ENCODE measurements at regions of chr2 and their contacts with region 1.

Region 1: GRCh38 chr2:45778720-45779171 is 127.3 kb downstream of the PRKCE start:
- DNase-seq: peak; percentile 55
- H3K4me3 ChIP-seq: no peak overlapping the region
- H3K27ac ChIP-seq: no peak overlapping the region
- H3K4me1 ChIP-seq: no peaks in the 10 kb centered on the region
- H3K27me3 ChIP-seq: peaks cover 0 to 2% of the 10 kb centered on the region in 2 experiments
- CTCF ChIP-seq: peak; percentile 52 to 64
- POLR2A ChIP-seq: no peak

Region 2: DNA sequence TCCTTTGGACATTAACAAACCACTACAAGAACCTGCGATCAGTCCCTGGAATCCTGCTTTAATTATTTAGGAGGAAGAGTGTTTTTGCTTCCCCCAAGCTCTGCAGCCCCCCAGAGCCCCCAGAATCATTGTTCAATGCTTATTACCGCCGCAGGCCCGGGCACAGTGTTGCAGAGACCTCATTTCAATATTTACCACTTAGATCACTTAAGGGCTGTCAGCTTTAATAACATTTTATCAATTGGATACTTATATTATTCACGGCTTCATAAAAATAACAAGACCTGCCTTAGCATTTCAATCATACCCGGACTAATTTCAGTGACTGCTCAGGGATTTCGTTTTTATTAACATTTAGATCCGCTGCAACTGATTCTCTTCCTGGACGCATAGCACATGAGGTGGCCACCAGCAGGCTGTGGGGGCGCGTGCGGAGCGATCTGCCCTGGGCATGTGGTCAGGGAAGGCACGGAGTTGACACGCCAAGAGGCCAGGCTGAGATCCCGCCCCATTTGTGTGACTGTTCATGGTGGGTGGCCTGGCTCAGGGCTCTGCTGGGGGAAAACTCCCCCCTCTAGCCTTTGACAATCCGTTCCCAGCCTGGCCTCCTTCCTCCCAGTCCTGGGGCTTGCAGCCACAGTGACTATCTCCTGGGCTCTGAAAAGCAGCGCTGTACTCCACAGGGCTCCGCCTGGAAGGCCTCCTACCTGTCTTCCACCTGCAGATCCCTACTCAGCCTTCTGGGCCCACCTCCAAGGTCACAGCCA is 435.3 kb before region 1 on chr2:
- CTCF ChIA-PET with region 1: no interaction called
- POLR2A ChIA-PET with region 1: no interaction called
- dilution Hi-C with region 1: no loop called
- intact Hi-C with region 1: no loop called
- DNase-seq: no peak
- H3K4me3 ChIP-seq: no peak overlapping the region
- H3K27ac ChIP-seq: no peak overlapping the region
- H3K4me1 ChIP-seq: no peaks in the 10 kb centered on the region
- H3K27me3 ChIP-seq: peaks cover 0 to 1% of the 10 kb centered on the region in 2 experiments
- CTCF ChIP-seq: no peak
- POLR2A ChIP-seq: no peak

Region 3: DNA sequence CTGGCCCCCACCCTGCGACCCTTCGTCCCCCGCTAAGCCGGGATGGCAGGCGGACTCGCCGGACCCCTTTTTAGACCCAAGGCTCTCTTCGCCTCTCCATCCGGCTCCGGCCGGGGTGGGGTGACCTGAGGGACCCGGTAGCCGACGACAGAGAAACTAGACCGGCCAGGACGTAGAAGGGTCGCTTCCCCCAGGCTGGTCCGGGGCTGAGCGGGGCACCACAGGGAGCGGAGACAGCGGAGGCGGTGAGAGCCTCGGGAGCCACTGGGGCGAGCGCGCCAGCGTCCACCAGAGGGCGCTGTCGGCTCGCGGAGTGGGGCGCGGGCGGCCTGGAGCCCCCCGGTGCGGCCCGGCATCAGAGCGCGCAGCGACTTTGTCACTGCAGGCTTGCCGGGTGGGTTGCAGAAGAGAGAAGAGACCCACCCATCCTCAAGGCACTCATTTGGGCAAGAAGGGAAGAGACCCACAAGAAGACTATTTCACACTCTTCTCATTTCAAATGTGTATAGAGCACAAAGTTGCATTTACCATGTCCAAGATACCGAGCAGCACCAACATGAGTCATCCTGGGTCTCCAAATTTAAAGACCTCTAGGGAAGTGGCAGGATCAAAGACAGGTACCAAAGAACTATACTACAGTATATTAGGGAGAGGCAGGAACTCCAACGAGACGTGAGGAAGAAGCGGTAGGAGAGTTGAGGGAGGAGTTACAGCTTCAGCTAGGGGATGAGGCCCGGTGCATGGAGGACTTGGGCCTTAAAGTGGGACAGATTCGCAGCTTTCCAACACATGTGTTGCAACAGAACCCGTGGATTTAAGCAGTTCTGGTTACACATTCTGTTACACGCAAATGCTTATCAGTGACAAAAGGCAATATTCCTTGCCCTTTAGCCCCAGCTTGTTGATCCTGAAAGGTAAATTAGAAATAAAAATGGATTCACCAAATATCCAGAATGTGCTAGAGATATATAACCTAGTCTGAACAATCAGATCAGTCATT is 134.9 kb before region 1 on chr2:
- CTCF ChIA-PET with region 1: interaction called, 31 read pairs
- POLR2A ChIA-PET with region 1: no interaction called
- dilution Hi-C with region 1: no loop called
- intact Hi-C with region 1: loop called (anchors 1 kb)
- DNase-seq: peak; percentile 51
- H3K4me3 ChIP-seq: peak overlapping the region; percentile 52 to 63 (median 59)
- H3K27ac ChIP-seq: peak overlapping the region; percentile 13
- H3K4me1 ChIP-seq: peaks cover 3% of the 10 kb centered on the region
- H3K27me3 ChIP-seq: no peaks in the 10 kb centered on the region
- CTCF ChIP-seq: peak; percentile 87 to 95
- POLR2A ChIP-seq: no peak

Region 4: DNA sequence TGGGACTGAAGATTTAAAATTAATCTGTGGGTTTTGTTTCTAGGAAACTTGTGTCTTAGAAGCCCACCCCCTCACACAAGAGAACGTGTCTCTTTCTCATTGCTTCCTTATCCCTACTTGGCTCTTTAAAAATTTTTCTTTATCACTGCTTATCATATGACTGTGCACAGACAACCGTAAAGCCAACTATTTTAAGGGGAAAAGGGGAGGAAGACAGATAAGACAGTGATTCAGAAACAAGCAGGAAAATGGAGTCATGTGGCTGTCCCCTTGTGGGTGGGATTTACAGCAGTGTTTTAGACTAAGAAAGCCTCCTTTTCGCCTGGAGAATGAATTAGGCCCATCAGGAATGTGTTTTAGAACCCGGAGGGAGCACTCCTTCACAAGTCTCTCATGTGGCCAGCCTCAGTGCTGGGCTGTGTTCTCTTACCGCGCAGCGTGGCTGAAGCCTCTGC is 109.7 kb before region 1 on chr2:
- CTCF ChIA-PET with region 1: no interaction called
- POLR2A ChIA-PET with region 1: no interaction called
- dilution Hi-C with region 1: no loop called
- intact Hi-C with region 1: loop called (anchors 1 kb)
- DNase-seq: peak; percentile 96
- H3K4me3 ChIP-seq: peak overlapping the region in 1 of 3 experiments; percentile 46
- H3K27ac ChIP-seq: peak overlapping the region; percentile 93
- H3K4me1 ChIP-seq: peaks cover 16% of the 10 kb centered on the region
- H3K27me3 ChIP-seq: no peaks in the 10 kb centered on the region
- CTCF ChIP-seq: no peak
- POLR2A ChIP-seq: peak; percentile 80

Region 5: DNA sequence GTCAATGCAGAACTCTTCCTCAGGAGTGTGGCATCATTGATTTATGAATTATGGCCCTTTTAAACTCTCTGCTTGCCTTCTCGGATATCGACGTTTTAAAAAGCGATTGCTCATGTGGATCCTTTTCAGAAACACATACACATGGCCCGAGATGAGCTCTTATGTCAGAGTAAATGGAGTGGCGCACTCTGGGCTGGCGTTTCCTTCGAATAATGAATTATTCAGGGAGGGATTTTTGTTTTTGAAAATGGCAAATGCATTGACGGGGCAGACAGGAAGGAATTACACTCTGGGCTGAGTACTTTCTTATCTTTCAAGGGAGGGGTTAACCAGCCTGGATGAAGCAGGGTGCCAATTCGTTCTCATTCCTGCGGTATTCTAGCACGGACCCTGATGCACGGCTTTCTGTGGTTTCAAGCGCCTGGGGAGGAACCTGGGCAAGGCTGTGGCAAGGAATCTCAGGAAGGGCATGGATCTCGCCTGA is 15.4 kb after region 1 on chr2:
- CTCF ChIA-PET with region 1: interaction called, 47 read pairs
- POLR2A ChIA-PET with region 1: no interaction called
- dilution Hi-C with region 1: no loop called
- intact Hi-C with region 1: no loop called
- DNase-seq: peak; percentile 61
- H3K4me3 ChIP-seq: peak overlapping the region in 1 of 3 experiments; percentile 20
- H3K27ac ChIP-seq: peak overlapping the region; percentile 41
- H3K4me1 ChIP-seq: peaks cover 43% of the 10 kb centered on the region
- H3K27me3 ChIP-seq: no peaks in the 10 kb centered on the region
- CTCF ChIP-seq: no peak
- POLR2A ChIP-seq: no peak

Region 6: GRCh38 chr2:45922571-45922988 is 143.8 kb after region 1 on chr2:
- CTCF ChIA-PET with region 1: interaction called, 10 read pairs
- POLR2A ChIA-PET with region 1: no interaction called
- dilution Hi-C with region 1: no loop called
- intact Hi-C with region 1: no loop called
- DNase-seq: no peak
- H3K4me3 ChIP-seq: no peak overlapping the region
- H3K27ac ChIP-seq: no peak overlapping the region
- H3K4me1 ChIP-seq: peaks cover 9% of the 10 kb centered on the region
- H3K27me3 ChIP-seq: no peaks in the 10 kb centered on the region
- CTCF ChIP-seq: no peak
- POLR2A ChIP-seq: no peak

Region 7: DNA sequence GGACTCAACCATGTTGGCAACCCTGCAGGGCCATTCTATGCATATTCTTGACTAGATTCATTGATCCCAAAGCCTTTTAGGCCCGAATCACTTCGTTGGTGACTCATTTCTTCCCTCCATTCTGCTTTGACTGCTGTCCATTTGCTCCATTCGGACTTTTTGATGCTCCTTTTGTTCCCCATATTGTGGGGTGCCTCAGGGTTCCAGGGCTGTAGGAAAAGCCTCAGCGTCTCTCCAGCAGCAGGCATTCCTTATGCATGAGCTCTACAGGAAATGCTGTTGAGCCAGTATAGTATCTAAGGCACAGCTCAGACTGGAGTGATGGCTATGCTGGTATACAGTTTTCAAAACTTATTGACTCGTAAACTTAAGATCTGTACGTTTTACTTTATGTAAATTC is 165.3 kb after region 1 on chr2:
- CTCF ChIA-PET with region 1: interaction called, 11 read pairs
- POLR2A ChIA-PET with region 1: no interaction called
- dilution Hi-C with region 1: no loop called
- intact Hi-C with region 1: no loop called
- DNase-seq: peak; percentile 63
- H3K4me3 ChIP-seq: no peak overlapping the region
- H3K27ac ChIP-seq: peak overlapping the region; percentile 41
- H3K4me1 ChIP-seq: peaks cover 42% of the 10 kb centered on the region
- H3K27me3 ChIP-seq: no peaks in the 10 kb centered on the region
- CTCF ChIP-seq: no peak
- POLR2A ChIP-seq: no peak

Measured in endothelial cell of umbilical vein (primary cell).